GM18951 (cell line): ENCODE measurements at regions of chr3 and their contacts with region 1.

Region 1: GRCh38 chr3:132404276-132404675 is 13.0 kb upstream of the DNAJC13 start:
- POLR2A ChIP-seq: no peak

Region 2: GRCh38 chr3:132354916-132355702 is 49.2 kb before region 1 on chr3:
- in situ Hi-C with region 1: loop called (anchors 5 kb)
- POLR2A ChIP-seq: no peak